CD4-positive, alpha-beta memory T cell (primary cell): ENCODE measurements at regions of chr10 and their contacts with region 1.

Region 1: GRCh38 chr10:50577681-50578350 is 45.9 kb downstream of the SGMS1 start:
- DNase-seq: no peak
- H3K4me3 ChIP-seq: no peak overlapping the region
- H3K4me3 Mint-ChIP-seq: no peak overlapping the region
- H3K27ac ChIP-seq: no peak overlapping the region
- H3K27ac Mint-ChIP-seq: peak overlapping the region in 2 of 7 donors; percentile 18 to 36
- H3K4me1 ChIP-seq: peaks cover 76% of the 10 kb centered on the region
- H3K4me1 Mint-ChIP-seq: peaks cover 64 to 88% (median 72%) of the 10 kb centered on the region in 4 donors
- H3K27me3 ChIP-seq: no peaks in the 10 kb centered on the region
- H3K27me3 Mint-ChIP-seq: no peaks in the 10 kb centered on the region

Region 2: GRCh38 chr10:49089557-49090188 is 1488.1 kb before region 1 on chr10:
- CTCF ChIA-PET with region 1: no interaction called
- POLR2A ChIA-PET with region 1: no interaction called
- intact Hi-C with region 1: no loop called
- DNase-seq: no peak
- H3K4me3 ChIP-seq: no peak overlapping the region
- H3K4me3 Mint-ChIP-seq: no peak overlapping the region
- H3K27ac ChIP-seq: no peak overlapping the region
- H3K27ac Mint-ChIP-seq: no peak overlapping the region
- H3K4me1 ChIP-seq: no peaks in the 10 kb centered on the region
- H3K4me1 Mint-ChIP-seq: no peaks in the 10 kb centered on the region
- H3K27me3 ChIP-seq: no peaks in the 10 kb centered on the region
- H3K27me3 Mint-ChIP-seq: peaks cover 0 to 2% of the 10 kb centered on the region in 2 donors

Region 3: GRCh38 chr10:50508315-50509051 is 69.3 kb before region 1 on chr10:
- CTCF ChIA-PET with region 1: no interaction called
- POLR2A ChIA-PET with region 1: no interaction called
- intact Hi-C with region 1: no loop called
- DNase-seq: peak in 2 of 5 donors; percentile 10 to 62
- H3K4me3 ChIP-seq: no peak overlapping the region
- H3K4me3 Mint-ChIP-seq: peak overlapping the region in 2 of 8 donors; percentile 0 to 6
- H3K27ac ChIP-seq: no peak overlapping the region
- H3K27ac Mint-ChIP-seq: peak overlapping the region in 2 of 7 donors; percentile 10 to 11
- H3K4me1 ChIP-seq: peaks cover 63% of the 10 kb centered on the region
- H3K4me1 Mint-ChIP-seq: peaks cover 55 to 75% (median 67%) of the 10 kb centered on the region in 4 donors
- H3K27me3 ChIP-seq: no peaks in the 10 kb centered on the region
- H3K27me3 Mint-ChIP-seq: no peaks in the 10 kb centered on the region

Region 4: DNA sequence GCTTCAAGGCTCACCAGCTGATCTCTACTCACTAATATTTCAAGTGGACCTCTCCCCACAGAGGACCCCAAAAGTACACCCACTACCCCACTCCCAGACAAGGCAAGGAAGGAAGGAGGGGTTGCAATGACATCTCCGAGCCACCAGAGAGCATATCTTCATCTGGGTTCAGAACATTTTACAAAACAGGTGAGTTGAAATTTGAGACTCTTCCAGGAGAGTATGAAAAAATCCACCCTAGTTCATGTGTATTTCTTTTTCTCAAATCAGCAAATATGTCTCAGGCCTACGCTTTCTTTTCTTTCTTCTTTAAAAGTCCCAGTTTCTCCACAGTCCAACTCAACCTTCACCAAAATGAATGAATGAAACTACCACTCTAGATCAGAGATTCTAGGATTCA is 16.0 kb before region 1 on chr10:
- CTCF ChIA-PET with region 1: interaction called, 11 read pairs
- POLR2A ChIA-PET with region 1: no interaction called
- intact Hi-C with region 1: no loop called
- DNase-seq: peak in 3 of 5 donors; percentile 15 to 25 (median 16)
- H3K4me3 ChIP-seq: no peak overlapping the region
- H3K4me3 Mint-ChIP-seq: no peak overlapping the region
- H3K27ac ChIP-seq: no peak overlapping the region
- H3K27ac Mint-ChIP-seq: peak overlapping the region in 2 of 7 donors; percentile 20 to 72
- H3K4me1 ChIP-seq: no peaks in the 10 kb centered on the region
- H3K4me1 Mint-ChIP-seq: peaks cover 19 to 47% (median 21%) of the 10 kb centered on the region in 4 donors
- H3K27me3 ChIP-seq: no peaks in the 10 kb centered on the region
- H3K27me3 Mint-ChIP-seq: no peaks in the 10 kb centered on the region